Activated CD8-positive, alpha-beta T cell treated with anti-CD3 and anti-CD28 coated beads, Interleukin-2, amount 10 ng/mL, durations not matched to agents 7 days and 5 days (primary cell): ENCODE measurements at regions of chr19 and their contacts with region 1.

Region 1: DNA sequence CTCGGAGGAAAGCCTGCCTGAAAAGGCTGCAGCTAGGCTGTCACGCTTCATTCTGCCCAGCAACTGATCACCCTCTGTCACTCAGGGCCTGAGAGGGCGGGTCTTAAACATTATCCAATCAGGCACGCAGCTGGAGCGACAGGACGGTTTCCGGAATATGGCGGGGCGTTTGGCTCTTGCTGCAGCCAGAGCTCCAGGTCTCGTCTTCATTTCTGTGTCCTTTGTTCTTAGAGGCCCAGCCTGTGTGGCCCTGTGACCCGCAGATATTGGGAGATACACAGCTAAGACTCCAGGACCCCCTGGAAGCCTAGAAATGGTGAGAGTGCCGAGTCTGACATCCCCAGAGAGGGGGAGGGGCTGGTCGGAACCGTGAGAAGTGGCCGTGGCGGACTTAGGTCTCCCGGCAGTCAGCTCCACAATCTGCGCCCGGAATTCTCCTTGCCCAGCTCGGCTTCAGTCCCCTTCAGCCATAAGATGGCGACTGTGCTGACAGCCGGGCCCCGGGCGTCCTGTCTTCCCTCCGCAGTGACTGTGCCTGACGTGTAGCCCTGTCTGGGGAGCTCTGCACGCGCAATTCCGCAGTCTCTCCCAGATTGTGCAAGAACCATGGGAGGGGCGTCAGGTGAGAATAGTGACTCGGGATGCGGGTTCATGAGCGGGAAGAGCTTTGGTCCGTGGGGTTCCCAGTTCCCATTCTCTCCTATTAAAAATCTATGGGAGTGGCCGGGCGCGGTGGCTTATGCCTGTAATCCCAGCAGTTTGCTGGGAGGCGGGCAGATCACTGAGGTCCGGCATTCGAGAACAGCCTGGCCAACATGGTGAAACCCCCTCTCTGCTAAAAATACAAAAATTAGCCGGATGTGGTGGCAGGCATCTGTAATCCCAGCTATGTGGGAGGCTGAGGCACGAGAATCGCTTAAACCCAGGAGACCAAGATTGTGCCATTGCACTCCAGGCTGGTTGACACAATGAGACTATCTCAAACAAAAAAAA is at the start of gene ZNF429:
- DNase-seq: peak; percentile 96
- ATAC-seq: peak; percentile 100
- H3K4me3 Mint-ChIP-seq: peak within 1 kb of the TSS; percentile 100
- H3K27ac Mint-ChIP-seq: peak within 1 kb of the TSS; percentile 99
- H3K4me1 Mint-ChIP-seq: peaks cover 28% of the 10 kb centered on the region
- H3K27me3 Mint-ChIP-seq: no peaks in the 10 kb centered on the region
- total RNA-seq, gene ZNF429: 13.0 to 14.0 TPM

Region 2: DNA sequence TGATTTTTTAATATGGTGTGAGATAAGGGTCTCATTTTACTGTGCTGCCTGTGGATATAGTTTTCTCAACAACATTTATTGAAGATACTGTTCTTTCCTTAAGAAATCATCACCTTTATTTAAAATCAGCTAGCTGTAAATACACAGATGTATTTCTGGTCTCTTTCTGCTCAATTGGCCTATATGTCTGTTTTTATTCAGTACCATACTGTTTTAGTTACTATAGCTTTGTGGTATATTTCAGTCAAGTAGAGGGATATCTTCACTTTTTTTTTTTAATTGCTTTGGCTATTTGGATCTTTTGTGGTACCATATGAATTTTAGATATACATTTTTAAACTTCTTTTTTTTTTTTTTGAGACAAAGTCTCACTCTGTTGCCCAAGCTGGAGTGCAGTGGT is 440.4 kb before region 1 on chr19:
- CTCF ChIA-PET with region 1: no interaction called
- POLR2A ChIA-PET with region 1: no interaction called
- DNase-seq: no peak
- ATAC-seq: no peak
- H3K4me3 Mint-ChIP-seq: no peak overlapping the region
- H3K27ac Mint-ChIP-seq: no peak overlapping the region
- H3K4me1 Mint-ChIP-seq: no peaks in the 10 kb centered on the region
- H3K27me3 Mint-ChIP-seq: no peaks in the 10 kb centered on the region

Region 3: GRCh38 chr19:21141787-21142464 is 363.8 kb before region 1 on chr19 and contains the start of gene ZNF431:
- CTCF ChIA-PET with region 1: no interaction called
- POLR2A ChIA-PET with region 1: interaction called, 10 read pairs
- DNase-seq: peak; percentile 95
- ATAC-seq: peak; percentile 99
- H3K4me3 Mint-ChIP-seq: peak within 1 kb of the TSS; percentile 98
- H3K27ac Mint-ChIP-seq: peak within 1 kb of the TSS; percentile 97
- H3K4me1 Mint-ChIP-seq: peaks cover 24% of the 10 kb centered on the region
- H3K27me3 Mint-ChIP-seq: no peaks in the 10 kb centered on the region
- total RNA-seq, gene ZNF431: 22.6 to 23.9 TPM

Region 4: GRCh38 chr19:21396893-21397572 is 108.7 kb before region 1 on chr19 and contains the start of gene ZNF493:
- CTCF ChIA-PET with region 1: interaction called, 3 read pairs
- POLR2A ChIA-PET with region 1: interaction called, 17 read pairs
- DNase-seq: peak; percentile 97
- ATAC-seq: peak; percentile 100
- H3K4me3 Mint-ChIP-seq: peak within 1 kb of the TSS; percentile 96
- H3K27ac Mint-ChIP-seq: peak within 1 kb of the TSS; percentile 98
- H3K4me1 Mint-ChIP-seq: peaks cover 21% of the 10 kb centered on the region
- H3K27me3 Mint-ChIP-seq: no peaks in the 10 kb centered on the region
- total RNA-seq, gene ZNF493: 20.3 to 21.6 TPM

Region 5: GRCh38 chr19:21482863-21483276 is 22.9 kb before region 1 on chr19:
- CTCF ChIA-PET with region 1: interaction called, 12 read pairs
- POLR2A ChIA-PET with region 1: interaction called, 3 read pairs
- DNase-seq: peak; percentile 68
- ATAC-seq: peak; percentile 74
- H3K4me3 Mint-ChIP-seq: no peak overlapping the region
- H3K27ac Mint-ChIP-seq: no peak overlapping the region
- H3K4me1 Mint-ChIP-seq: peaks cover 2% of the 10 kb centered on the region
- H3K27me3 Mint-ChIP-seq: no peaks in the 10 kb centered on the region

Region 6: DNA sequence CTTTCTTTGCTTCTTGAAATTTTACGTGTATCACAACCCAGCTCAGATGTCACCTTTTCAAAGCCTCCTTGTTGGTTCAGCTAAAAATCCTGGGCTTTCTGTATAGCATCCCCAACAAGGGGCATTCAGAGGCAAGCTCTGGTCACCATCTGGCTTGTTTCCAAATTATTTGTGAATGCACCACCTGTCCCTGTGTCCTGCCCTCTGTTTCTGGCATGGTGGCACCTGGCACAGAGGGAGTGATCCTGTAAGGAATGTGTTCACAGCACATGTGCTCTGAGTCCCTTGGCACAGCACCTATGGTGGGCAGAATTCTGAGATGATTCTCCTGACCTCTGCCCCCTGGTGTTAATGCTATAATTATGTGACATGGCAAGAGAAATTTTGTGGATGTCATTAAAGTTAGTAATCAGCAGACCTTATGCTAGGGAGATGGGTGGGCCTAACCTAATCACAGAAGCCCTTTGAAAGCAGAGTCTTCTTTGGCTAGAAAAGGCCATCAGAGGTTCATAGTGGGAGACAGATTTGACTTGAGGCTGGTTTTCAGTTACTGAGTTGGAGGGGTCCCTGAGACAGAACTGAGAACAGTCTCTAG is 76.0 kb after region 1 on chr19:
- CTCF ChIA-PET with region 1: interaction called, 3 read pairs
- POLR2A ChIA-PET with region 1: interaction called, 18 read pairs
- DNase-seq: no peak
- ATAC-seq: no peak
- H3K4me3 Mint-ChIP-seq: no peak overlapping the region
- H3K27ac Mint-ChIP-seq: no peak overlapping the region
- H3K4me1 Mint-ChIP-seq: peaks cover 31% of the 10 kb centered on the region
- H3K27me3 Mint-ChIP-seq: no peaks in the 10 kb centered on the region

Region 7: DNA sequence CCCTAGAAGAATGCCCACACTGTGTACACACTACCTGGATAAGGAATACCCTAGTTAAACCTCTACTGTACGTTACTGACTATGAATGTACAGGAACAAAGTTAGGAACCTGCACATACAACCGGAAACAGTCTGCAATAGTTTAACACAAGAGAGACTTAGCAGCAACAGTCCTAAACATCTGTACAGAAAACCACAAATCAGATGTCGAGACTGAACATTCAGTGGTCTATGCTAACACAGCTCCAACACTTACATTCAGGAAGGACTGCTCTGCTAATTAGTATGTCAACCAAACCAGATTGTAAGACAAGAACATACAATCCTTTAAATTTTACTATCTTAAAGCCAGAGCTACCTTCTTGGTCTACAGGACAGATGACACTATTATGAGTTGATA is 104.6 kb after region 1 on chr19:
- CTCF ChIA-PET with region 1: no interaction called
- POLR2A ChIA-PET with region 1: no interaction called
- DNase-seq: no peak
- ATAC-seq: no peak
- H3K4me3 Mint-ChIP-seq: no peak overlapping the region
- H3K27ac Mint-ChIP-seq: no peak overlapping the region
- H3K4me1 Mint-ChIP-seq: no peaks in the 10 kb centered on the region
- H3K27me3 Mint-ChIP-seq: no peaks in the 10 kb centered on the region

Region 8: GRCh38 chr19:21835810-21836444 is 330.2 kb after region 1 on chr19 and contains the start of gene ZNF43:
- CTCF ChIA-PET with region 1: no interaction called
- POLR2A ChIA-PET with region 1: interaction called, 20 read pairs
- DNase-seq: peak; percentile 96
- ATAC-seq: peak; percentile 99
- H3K4me3 Mint-ChIP-seq: peak within 1 kb of the TSS; percentile 98
- H3K27ac Mint-ChIP-seq: peak within 1 kb of the TSS; percentile 99
- H3K4me1 Mint-ChIP-seq: peaks cover 30% of the 10 kb centered on the region
- H3K27me3 Mint-ChIP-seq: no peaks in the 10 kb centered on the region
- total RNA-seq, gene ZNF43: 31.3 to 34.3 TPM